Panc1 (cell line): ENCODE measurements at regions of chr7 and their contacts with region 1.

Region 1: DNA sequence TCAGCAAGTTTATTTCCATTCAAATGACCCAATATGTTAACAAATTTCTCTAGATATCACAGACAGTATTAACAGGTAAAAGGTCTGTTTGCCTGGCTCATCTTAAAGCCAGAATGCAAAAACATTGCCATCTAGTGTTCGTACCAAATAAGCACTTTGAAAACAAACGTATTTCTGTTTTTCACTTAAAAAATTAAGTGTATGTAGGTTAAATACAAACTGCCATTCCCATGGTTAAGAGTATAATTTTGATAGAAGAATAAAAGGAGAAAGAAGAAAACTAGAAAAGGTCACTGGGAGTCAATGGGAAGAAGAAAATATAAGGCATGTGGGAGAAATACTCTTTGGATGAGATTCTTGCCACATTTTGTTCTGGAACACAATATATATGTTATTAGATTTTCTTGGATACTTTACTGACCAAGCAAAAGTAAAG is 51.0 kb downstream of the ORC5 start:
- DNase-seq: peak; percentile 17
- ATAC-seq: no peak
- H3K4me3 ChIP-seq: no peak overlapping the region
- H3K27ac ChIP-seq: no peak overlapping the region
- H3K4me1 ChIP-seq: no peaks in the 10 kb centered on the region
- H3K27me3 ChIP-seq: no peaks in the 10 kb centered on the region
- CTCF ChIP-seq: peak; percentile 66; the same call in 1 of the 2 replicates

Region 2: GRCh38 chr7:103447073-103447951 is 709.5 kb before region 1 on chr7:
- CTCF ChIA-PET with region 1: no interaction called
- POLR2A ChIA-PET with region 1: no interaction called
- in situ Hi-C with region 1: no loop called
- intact Hi-C with region 1: loop called (anchors 5 kb)
- DNase-seq: peak; percentile 46
- ATAC-seq: peak; percentile 96
- H3K4me3 ChIP-seq: no peak overlapping the region
- H3K27ac ChIP-seq: no peak overlapping the region
- H3K4me1 ChIP-seq: peaks cover 3% of the 10 kb centered on the region; the same call in 1 of the 2 replicates
- H3K27me3 ChIP-seq: peaks cover 51% of the 10 kb centered on the region
- CTCF ChIP-seq: peak; percentile 91

Region 3: GRCh38 chr7:103915680-103916357 is 241.0 kb before region 1 on chr7:
- CTCF ChIA-PET with region 1: no interaction called
- POLR2A ChIA-PET with region 1: no interaction called
- in situ Hi-C with region 1: no loop called
- intact Hi-C with region 1: no loop called
- DNase-seq: no peak
- ATAC-seq: no peak
- H3K4me3 ChIP-seq: no peak overlapping the region
- H3K27ac ChIP-seq: no peak overlapping the region
- H3K4me1 ChIP-seq: no peaks in the 10 kb centered on the region
- H3K27me3 ChIP-seq: no peaks in the 10 kb centered on the region
- CTCF ChIP-seq: no peak

Region 4: GRCh38 chr7:104351012-104351411 is 194.2 kb after region 1 on chr7:
- CTCF ChIA-PET with region 1: no interaction called
- POLR2A ChIA-PET with region 1: no interaction called
- in situ Hi-C with region 1: no loop called
- intact Hi-C with region 1: no loop called
- DNase-seq: no peak
- ATAC-seq: no peak
- H3K4me3 ChIP-seq: no peak overlapping the region
- H3K27ac ChIP-seq: no peak overlapping the region
- H3K4me1 ChIP-seq: no peaks in the 10 kb centered on the region
- H3K27me3 ChIP-seq: no peaks in the 10 kb centered on the region
- CTCF ChIP-seq: no peak